ENCODE measurements at regions of chr5 and their contacts with region 1.

Region 1: DNA sequence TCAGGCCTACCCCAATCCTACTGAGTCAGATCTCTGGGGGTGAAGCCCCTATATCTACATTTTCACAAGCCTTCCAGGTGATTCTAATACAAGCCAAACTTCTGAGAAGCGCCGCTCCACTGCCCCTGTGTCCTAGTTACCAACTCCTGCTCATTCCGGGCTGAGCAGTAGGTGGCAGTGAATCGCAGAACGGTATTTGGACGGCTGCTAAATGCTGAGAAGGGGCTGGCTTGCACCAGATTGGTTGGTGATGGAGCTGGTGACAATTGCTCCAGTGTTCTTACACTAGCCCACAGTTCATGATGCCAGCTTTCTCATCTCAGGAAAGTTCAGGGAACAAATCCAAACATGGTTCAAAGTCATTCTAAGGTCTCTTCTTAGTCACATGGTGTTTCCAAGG is 31.1 kb upstream of the FGF1 start:
- DNase-seq: peak; percentile 77 to 87 (median 83)
- H3K4me3 ChIP-seq: no peak overlapping the region
- H3K27ac ChIP-seq: no peak overlapping the region
- H3K4me1 ChIP-seq: peaks cover 0 to 10% (median 5%) of the 10 kb centered on the region in 3 donors
- H3K27me3 ChIP-seq: no peaks in the 10 kb centered on the region
- CTCF ChIP-seq: peak; percentile 63

Region 2: GRCh38 chr5:142878638-142879037 is 161.7 kb after region 1 on chr5:
- intact Hi-C with region 1: loop called (anchors 5 kb)
- DNase-seq: no peak
- H3K4me3 ChIP-seq: no peak overlapping the region
- H3K27ac ChIP-seq: no peak overlapping the region
- H3K4me1 ChIP-seq: peaks cover 3 to 25% (median 12%) of the 10 kb centered on the region in 3 donors
- H3K27me3 ChIP-seq: no peaks in the 10 kb centered on the region
- CTCF ChIP-seq: no peak